ENCODE measurements at regions of chr3 and their contacts with region 1.

Region 1: DNA sequence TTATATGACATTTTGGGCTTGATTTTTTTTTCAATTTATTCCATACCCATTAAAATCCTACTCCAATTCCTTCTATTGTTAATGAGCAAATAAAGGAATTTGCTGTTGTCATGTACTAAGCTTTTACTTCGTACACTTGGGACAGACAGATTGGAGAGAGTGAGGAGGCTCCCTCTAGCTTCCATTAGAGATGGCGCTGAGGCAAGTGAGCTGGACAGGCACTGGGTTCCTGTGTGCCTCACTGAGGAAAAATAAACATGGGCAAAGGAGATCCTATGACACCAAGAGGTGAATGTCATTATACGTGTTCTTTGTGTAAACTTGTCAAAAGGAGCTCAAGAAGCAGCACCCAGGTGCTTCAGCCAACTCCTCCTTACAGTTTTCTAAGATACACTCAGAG is 441.2 kb upstream of the MDFIC2 start:
- H3K4me3 ChIP-seq: no peak overlapping the region
- H3K27ac ChIP-seq: no peak overlapping the region
- H3K4me1 ChIP-seq: no peaks in the 10 kb centered on the region
- CTCF ChIP-seq: no peak

Region 2: DNA sequence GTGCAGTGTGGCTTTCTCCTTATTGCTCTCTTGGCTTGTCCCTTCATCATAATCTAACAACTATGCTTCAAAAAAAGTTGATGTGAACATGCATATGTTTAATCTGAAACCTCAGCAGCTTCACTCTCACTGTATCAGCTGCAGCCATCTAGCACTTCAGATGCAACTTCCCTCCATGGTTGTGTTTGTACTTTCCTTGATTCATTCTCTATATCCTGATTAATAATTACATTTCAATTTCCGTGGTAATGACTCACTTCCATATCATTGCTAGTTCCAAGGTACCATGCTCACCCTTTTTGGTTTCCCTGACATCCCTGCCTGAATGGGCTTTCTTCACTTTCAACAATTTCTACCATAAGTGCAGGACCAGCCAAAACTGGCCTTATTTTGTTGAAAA is 492.3 kb before region 1 on chr3:
- CTCF ChIA-PET with region 1: no interaction called
- POLR2A ChIA-PET with region 1: no interaction called
- H3K4me3 ChIP-seq: no peak overlapping the region
- H3K27ac ChIP-seq: no peak overlapping the region
- H3K4me1 ChIP-seq: no peaks in the 10 kb centered on the region
- CTCF ChIP-seq: no peak

Region 3: DNA sequence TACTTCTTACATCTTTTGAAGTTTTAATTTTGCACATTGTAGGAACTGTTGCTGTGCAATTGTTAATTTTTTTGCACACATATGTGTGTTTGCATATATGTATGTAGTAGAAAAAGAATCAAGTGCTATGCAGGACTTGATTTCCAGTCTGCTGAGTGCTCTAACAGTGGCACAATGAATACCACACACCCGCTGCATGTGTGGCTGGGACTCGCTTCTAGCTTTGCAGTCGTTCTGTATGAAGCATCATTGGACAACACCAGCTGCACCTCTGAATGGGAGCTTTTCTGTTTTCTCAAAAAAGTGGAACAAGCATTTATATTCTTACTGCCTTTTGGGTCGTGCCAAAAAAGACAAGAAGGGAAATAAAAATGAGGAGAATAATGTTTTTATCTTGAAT is 265.2 kb after region 1 on chr3:
- CTCF ChIA-PET with region 1: no interaction called
- POLR2A ChIA-PET with region 1: interaction called, 11 read pairs
- H3K4me3 ChIP-seq: no peak overlapping the region
- H3K27ac ChIP-seq: no peak overlapping the region
- H3K4me1 ChIP-seq: no peaks in the 10 kb centered on the region
- CTCF ChIP-seq: no peak